Endothelial cell of umbilical vein (primary cell): ENCODE measurements at regions of chr6 and their contacts with region 1.

Region 1: GRCh38 chr6:32255199-32256153 is 31.6 kb upstream of the NOTCH4 start:
- DNase-seq: peak; percentile 91
- H3K4me3 ChIP-seq: peak overlapping the region in 1 of 3 experiments; percentile 19
- H3K27ac ChIP-seq: peak overlapping the region; percentile 79
- H3K4me1 ChIP-seq: peaks cover 27% of the 10 kb centered on the region
- H3K27me3 ChIP-seq: no peaks in the 10 kb centered on the region
- CTCF ChIP-seq: peak; percentile 33 to 86
- POLR2A ChIP-seq: peak; percentile 72

Region 2: DNA sequence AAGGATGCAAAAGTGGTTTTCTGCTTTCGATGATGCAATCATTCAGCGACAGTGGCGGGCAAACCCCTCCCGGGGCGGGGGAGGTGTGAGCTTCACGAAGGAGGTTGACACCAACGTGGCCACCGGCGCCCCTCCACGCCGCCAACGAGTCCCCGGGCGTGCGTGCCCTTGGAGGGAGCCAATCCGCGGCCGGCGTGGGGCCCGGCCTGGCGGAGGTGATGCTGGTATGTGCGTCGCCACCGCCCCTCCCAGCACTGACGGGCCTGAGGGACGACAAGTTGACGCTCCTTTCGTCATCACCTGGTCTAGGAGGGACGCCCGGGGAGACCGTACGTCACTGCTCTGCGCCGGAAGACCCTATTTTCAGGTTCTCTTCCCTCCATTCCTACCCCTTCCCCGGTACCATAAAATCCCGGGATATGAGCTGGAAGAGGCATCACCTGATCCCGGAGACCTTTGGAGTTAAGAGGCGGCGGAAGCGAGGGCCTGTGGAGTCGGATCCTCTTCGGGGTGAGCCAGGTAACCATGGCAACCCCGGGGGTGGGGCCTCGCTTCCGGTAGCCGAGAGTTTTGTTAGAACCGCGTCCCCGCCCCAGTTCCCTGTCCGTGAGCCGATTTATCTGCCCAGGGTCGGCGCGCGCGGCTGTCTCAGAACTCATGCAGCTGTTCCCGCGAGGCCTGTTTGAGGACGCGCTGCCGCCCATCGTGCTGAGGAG is 283.3 kb before region 1 on chr6 and contains the start of gene DXO:
- CTCF ChIA-PET with region 1: no interaction called
- POLR2A ChIA-PET with region 1: no interaction called
- dilution Hi-C with region 1: no loop called
- intact Hi-C with region 1: no loop called
- DNase-seq: peak; percentile 98
- H3K4me3 ChIP-seq: peak within 1 kb of the TSS; percentile 51 to 73 (median 63)
- H3K27ac ChIP-seq: peak within 1 kb of the TSS; percentile 79
- H3K4me1 ChIP-seq: peaks cover 17% of the 10 kb centered on the region
- H3K27me3 ChIP-seq: no peaks in the 10 kb centered on the region
- CTCF ChIP-seq: no peak
- POLR2A ChIP-seq: no peak
- total RNA-seq, gene DXO: 18.0 and 20.7 TPM in 2 replicates

Region 3: GRCh38 chr6:32127717-32128592 is 127.5 kb before region 1 on chr6 and contains the start of gene ATF6B:
- CTCF ChIA-PET with region 1: no interaction called
- POLR2A ChIA-PET with region 1: no interaction called
- dilution Hi-C with region 1: no loop called
- intact Hi-C with region 1: loop called (anchors 1 kb)
- DNase-seq: peak; percentile 99
- H3K4me3 ChIP-seq: peak within 1 kb of the TSS; percentile 71 to 99 (median 84)
- H3K27ac ChIP-seq: peak within 1 kb of the TSS; percentile 83
- H3K4me1 ChIP-seq: peaks cover 20% of the 10 kb centered on the region
- H3K27me3 ChIP-seq: no peaks in the 10 kb centered on the region
- CTCF ChIP-seq: no peak
- POLR2A ChIP-seq: no peak
- total RNA-seq, gene ATF6B: 102 and 106 TPM in 2 replicates

Region 4: GRCh38 chr6:32355018-32355417 is 99.5 kb after region 1 on chr6:
- CTCF ChIA-PET with region 1: no interaction called
- POLR2A ChIA-PET with region 1: no interaction called
- dilution Hi-C with region 1: no loop called
- intact Hi-C with region 1: loop called (anchors 5 kb)
- DNase-seq: no peak
- H3K4me3 ChIP-seq: no peak overlapping the region
- H3K27ac ChIP-seq: no peak overlapping the region
- H3K4me1 ChIP-seq: peaks cover 7% of the 10 kb centered on the region
- H3K27me3 ChIP-seq: no peaks in the 10 kb centered on the region
- CTCF ChIP-seq: no peak
- POLR2A ChIP-seq: no peak

Region 5: DNA sequence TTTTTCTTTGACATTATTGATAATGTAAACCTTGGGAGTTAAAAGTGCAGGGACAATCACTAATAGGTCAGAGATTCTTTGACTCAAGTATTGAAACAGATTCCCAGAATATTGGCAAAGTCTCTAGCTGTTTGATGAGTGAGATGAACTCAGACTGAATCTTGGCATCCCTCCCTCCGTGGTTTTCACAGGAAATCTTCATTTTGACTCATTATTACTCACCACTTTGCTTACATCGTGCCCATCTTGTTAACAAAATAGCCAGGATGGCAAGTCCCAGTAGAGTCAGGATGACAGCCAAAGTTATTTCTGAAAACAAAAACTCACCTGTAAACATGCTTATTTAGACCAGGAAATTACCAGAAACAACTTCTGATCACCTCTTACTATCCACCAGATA is 114.2 kb after region 1 on chr6:
- CTCF ChIA-PET with region 1: no interaction called
- POLR2A ChIA-PET with region 1: no interaction called
- dilution Hi-C with region 1: no loop called
- intact Hi-C with region 1: loop called (anchors 1 kb)
- DNase-seq: peak; percentile 93
- H3K4me3 ChIP-seq: no peak overlapping the region
- H3K27ac ChIP-seq: peak overlapping the region; percentile 96
- H3K4me1 ChIP-seq: peaks cover 25% of the 10 kb centered on the region
- H3K27me3 ChIP-seq: peaks cover 0 to 5% of the 10 kb centered on the region in 2 experiments
- CTCF ChIP-seq: no peak
- POLR2A ChIP-seq: no peak

Region 6: DNA sequence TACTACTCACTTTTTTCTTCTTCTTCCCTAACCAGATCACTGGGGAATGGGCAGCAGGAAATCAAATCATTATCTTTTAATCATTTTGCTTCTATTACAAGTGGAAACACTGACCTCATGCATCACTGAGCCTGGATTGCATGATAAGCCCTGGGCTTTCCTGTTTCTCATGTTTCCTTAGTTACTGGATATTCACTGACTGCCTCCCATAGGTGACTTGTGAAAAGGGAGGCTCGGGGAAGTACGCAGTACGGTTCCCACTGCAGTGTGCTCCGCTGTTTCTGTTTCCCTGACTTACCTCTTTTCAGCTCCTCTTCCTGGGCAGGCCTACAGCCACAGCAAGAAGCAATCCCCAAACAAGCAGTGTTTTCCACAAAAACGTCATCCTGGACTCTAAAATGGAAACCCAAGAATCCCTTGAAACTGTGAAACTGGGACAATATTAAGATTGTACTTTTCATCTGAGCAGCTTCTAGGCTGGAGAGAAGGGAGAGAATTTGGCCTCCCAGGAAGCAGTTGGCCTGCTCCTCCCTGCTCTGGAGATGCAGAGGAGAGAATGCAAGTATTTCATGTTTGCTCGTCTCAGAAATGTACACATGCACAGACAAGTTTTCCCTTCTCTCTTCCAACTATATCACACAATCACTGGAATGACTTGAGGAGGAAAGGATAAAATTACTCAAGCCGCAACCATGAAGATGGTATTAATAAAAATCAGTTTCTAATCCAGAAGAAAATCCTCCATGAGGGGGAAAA is 138.4 kb after region 1 on chr6:
- CTCF ChIA-PET with region 1: interaction called, 13 read pairs
- POLR2A ChIA-PET with region 1: interaction called, 3 read pairs
- dilution Hi-C with region 1: no loop called
- intact Hi-C with region 1: loop called (anchors 1 kb)
- DNase-seq: peak; percentile 99
- H3K4me3 ChIP-seq: no peak overlapping the region
- H3K27ac ChIP-seq: peak overlapping the region; percentile 86
- H3K4me1 ChIP-seq: peaks cover 13% of the 10 kb centered on the region
- H3K27me3 ChIP-seq: no peaks in the 10 kb centered on the region
- CTCF ChIP-seq: no peak
- POLR2A ChIP-seq: no peak